ENCODE measurements at regions of chr10 and their contacts with region 1.

Region 1: GRCh38 chr10:45464958-45465567 is 91.0 kb downstream of the ALOX5 start:
- DNase-seq: peak; percentile 78
- H3K4me3 ChIP-seq: no peak overlapping the region
- H3K27ac ChIP-seq: no peak overlapping the region
- H3K4me1 ChIP-seq: no peaks in the 10 kb centered on the region
- H3K27me3 ChIP-seq: no peaks in the 10 kb centered on the region
- CTCF ChIP-seq: peak; percentile 90

Region 2: GRCh38 chr10:45034301-45034700 is 430.8 kb before region 1 on chr10:
- CTCF ChIA-PET with region 1: no interaction called
- POLR2A ChIA-PET with region 1: no interaction called
- intact Hi-C with region 1: no loop called
- DNase-seq: no peak
- H3K4me3 ChIP-seq: no peak overlapping the region
- H3K27ac ChIP-seq: no peak overlapping the region
- H3K4me1 ChIP-seq: no peaks in the 10 kb centered on the region
- H3K27me3 ChIP-seq: no peaks in the 10 kb centered on the region
- CTCF ChIP-seq: no peak

Region 3: GRCh38 chr10:45532480-45532879 is 67.4 kb after region 1 on chr10:
- CTCF ChIA-PET with region 1: no interaction called
- POLR2A ChIA-PET with region 1: no interaction called
- intact Hi-C with region 1: no loop called
- DNase-seq: no peak
- H3K4me3 ChIP-seq: no peak overlapping the region
- H3K27ac ChIP-seq: no peak overlapping the region
- H3K4me1 ChIP-seq: no peaks in the 10 kb centered on the region
- H3K27me3 ChIP-seq: no peaks in the 10 kb centered on the region
- CTCF ChIP-seq: no peak

Region 4: DNA sequence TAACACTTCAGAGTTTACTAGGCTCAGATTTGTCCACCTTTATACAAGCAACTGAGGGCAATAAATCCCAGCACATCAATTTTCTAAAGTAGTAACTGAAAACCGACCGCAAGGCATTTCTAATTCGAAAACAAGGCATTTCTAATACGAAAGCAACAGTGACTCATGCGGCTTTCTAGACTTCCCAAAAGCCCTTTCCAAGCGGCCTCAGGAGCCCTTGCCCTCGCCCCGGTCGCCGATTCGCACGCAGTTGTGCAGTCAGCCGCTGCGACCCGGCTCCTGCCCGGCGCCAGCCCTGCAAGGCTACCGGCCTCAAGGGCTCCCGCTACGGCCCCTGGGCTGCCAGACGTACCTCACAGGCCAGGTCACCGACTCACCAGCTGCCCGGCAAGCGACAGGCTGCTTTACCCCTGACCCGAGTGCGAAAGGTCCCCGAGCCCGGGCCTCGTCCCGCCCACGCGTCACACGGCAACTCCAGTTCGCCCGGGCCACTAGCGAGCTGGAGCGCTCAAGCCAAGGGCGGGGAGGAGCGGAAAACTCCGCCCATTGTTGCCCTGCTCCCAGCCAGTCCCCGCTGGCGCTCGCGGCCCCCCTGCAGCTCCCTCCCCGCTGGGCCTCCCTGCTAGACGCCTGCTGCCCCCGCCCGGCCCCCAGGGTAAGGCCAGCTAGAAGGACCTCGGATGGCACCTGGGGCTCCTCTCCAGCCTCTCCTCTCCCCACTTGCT is 558.1 kb after region 1 on chr10:
- CTCF ChIA-PET with region 1: no interaction called
- POLR2A ChIA-PET with region 1: no interaction called
- intact Hi-C with region 1: loop called (anchors 10 kb)
- DNase-seq: peak; percentile 82
- H3K4me3 ChIP-seq: peak overlapping the region; percentile 79
- H3K27ac ChIP-seq: peak overlapping the region; percentile 77
- H3K4me1 ChIP-seq: peaks cover 4% of the 10 kb centered on the region
- H3K27me3 ChIP-seq: no peaks in the 10 kb centered on the region
- CTCF ChIP-seq: 0 out of 2 replicates have a peak, but pooled peaks have one; percentile 32

Region 5: GRCh38 chr10:46255801-46256747 is 791.0 kb after region 1 on chr10:
- CTCF ChIA-PET with region 1: no interaction called
- POLR2A ChIA-PET with region 1: no interaction called
- intact Hi-C with region 1: loop called (anchors 5 kb)
- DNase-seq: peak; percentile 40
- H3K4me3 ChIP-seq: no peak overlapping the region
- H3K27ac ChIP-seq: no peak overlapping the region
- H3K4me1 ChIP-seq: no peaks in the 10 kb centered on the region
- H3K27me3 ChIP-seq: no peaks in the 10 kb centered on the region
- CTCF ChIP-seq: peak; percentile 59